AG04450 (cell line): ENCODE measurements at regions of chr5 and their contacts with region 1.

Region 1: GRCh38 chr5:151115274-151115905 is 34.6 kb upstream of the TNIP1 start:
- DNase-seq: no peak
- H3K4me3 ChIP-seq: no peak overlapping the region
- H3K27ac ChIP-seq: no peak overlapping the region
- H3K27me3 ChIP-seq: no peaks in the 10 kb centered on the region
- CTCF ChIP-seq: peak; percentile 100

Region 2: DNA sequence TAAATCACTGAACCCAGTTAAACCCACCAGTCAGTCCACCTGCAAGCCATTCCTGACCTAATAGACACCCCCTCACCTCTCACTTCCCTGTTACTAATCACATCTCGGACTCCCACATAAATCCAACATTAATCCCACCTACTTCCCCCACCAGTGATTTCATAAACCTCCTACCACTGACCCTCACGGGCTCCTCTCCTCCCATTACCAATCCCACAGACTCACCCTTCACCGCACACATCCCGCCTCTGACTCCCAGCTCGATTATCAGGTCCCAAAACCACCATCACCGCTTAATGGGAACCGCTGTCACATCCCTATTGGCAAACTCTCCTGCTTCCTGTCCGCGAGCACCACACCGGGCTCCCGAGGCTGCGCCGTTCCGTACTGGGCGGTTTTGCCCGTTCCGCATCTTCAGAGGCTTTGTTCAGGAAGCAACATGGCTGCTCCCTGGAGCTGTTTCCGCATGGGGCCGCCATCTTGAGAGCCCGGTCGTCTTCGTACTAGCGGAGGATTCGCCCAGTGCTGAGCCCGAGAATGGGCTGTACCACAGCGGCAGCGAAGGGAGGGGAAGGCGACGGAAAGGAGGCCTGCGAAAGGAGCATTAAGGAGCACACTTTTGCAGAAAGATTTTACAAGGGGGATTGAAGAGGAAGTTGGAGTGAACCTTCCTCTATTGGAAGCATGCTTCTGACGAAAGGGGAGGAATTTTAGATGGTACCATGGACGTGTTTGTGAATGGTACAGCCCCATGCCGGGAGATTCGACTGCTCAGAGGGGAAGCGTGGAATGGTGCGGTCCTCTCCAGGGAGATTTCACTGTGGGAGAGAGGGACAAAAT is 210.7 kb before region 1 on chr5 and contains the start of gene ZNF300:
- CTCF ChIA-PET with region 1: no interaction called
- POLR2A ChIA-PET with region 1: no interaction called
- DNase-seq: peak; percentile 88
- H3K4me3 ChIP-seq: peak within 1 kb of the TSS; percentile 90
- H3K27ac ChIP-seq: peak within 1 kb of the TSS; percentile 90
- H3K27me3 ChIP-seq: no peaks in the 10 kb centered on the region
- CTCF ChIP-seq: no peak
- polyA plus RNA-seq, gene ZNF300: 7.3 and 10.1 TPM in 2 replicates

Region 3: DNA sequence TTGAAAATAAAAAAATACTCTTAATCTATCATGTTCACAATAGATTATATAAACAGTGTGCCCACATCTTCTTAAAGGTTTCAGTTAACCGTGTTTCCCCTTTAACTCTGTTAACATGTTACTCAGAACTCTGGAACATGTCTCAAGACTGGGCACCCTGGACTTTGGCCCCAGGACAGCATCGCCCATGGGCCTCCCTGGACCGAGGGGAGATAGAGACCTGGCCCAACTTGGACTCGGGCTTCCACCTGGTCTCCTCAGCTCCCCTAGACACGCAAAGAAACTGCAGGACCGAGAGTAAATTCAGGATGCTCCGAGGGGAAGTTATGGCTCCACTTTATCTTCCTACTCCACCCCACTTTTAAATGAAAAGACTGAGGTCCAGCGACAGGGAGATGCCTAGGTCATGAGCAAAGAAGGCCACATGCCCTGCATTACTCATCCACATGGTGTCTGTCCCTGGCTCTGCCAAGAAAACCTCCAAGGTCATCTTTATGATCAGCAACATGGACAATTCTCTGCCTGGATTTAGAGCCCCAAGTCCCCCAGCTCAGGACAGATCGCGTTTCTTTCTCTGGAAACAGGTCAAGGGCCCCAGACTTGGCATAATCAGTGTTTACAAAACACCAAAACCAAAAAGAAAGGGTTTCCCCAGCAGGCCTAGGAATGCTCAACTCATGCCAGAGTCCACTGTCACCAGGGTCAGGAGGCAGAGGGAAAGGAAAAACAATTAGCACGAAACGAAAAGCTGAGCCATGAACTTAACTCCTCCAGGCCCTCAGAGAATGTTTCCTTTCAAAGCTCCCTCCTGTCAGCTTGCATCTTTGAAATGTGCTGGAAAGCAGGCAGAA is 77.6 kb before region 1 on chr5:
- CTCF ChIA-PET with region 1: interaction called, 52 read pairs
- POLR2A ChIA-PET with region 1: no interaction called
- DNase-seq: peak; percentile 26
- H3K4me3 ChIP-seq: no peak overlapping the region
- H3K27ac ChIP-seq: peak overlapping the region; percentile 67
- H3K27me3 ChIP-seq: no peaks in the 10 kb centered on the region
- CTCF ChIP-seq: no peak

Region 4: GRCh38 chr5:151068433-151069197 is 46.8 kb before region 1 on chr5:
- CTCF ChIA-PET with region 1: interaction called, 16 read pairs
- POLR2A ChIA-PET with region 1: interaction called, 3 read pairs
- DNase-seq: no peak
- H3K4me3 ChIP-seq: no peak overlapping the region
- H3K27ac ChIP-seq: no peak overlapping the region
- H3K27me3 ChIP-seq: no peaks in the 10 kb centered on the region
- CTCF ChIP-seq: no peak

Region 5: DNA sequence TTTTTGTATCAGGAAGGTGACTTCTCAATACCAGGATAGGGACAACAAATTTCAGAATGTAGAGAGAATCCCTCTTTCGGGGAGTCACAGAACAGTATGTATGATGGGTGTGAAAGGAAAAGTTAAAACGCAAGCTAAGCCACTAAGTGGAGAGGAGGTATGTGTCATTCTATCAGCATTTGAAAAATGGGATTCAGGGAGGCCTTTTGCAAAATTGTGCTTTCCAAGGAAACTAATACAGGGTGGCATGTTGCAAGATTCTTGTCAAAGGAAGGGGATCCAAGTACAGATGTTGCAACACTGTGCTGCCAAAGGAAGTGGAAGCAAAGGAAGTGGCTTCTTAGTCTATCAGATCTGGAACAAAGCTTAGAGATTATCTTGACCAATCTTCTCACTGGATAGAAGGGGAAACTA is 21.9 kb before region 1 on chr5:
- CTCF ChIA-PET with region 1: interaction called, 37 read pairs
- POLR2A ChIA-PET with region 1: no interaction called
- DNase-seq: no peak
- H3K4me3 ChIP-seq: no peak overlapping the region
- H3K27ac ChIP-seq: peak overlapping the region; percentile 89
- H3K27me3 ChIP-seq: no peaks in the 10 kb centered on the region
- CTCF ChIP-seq: no peak

Region 6: GRCh38 chr5:151141535-151141934 is 26.1 kb after region 1 on chr5:
- CTCF ChIA-PET with region 1: interaction called, 53 read pairs
- POLR2A ChIA-PET with region 1: no interaction called
- DNase-seq: no peak
- H3K4me3 ChIP-seq: no peak overlapping the region
- H3K27ac ChIP-seq: peak overlapping the region; percentile 39
- H3K27me3 ChIP-seq: no peaks in the 10 kb centered on the region
- CTCF ChIP-seq: no peak

Region 7: GRCh38 chr5:151164686-151165392 is 49.4 kb after region 1 on chr5:
- CTCF ChIA-PET with region 1: interaction called, 84 read pairs
- POLR2A ChIA-PET with region 1: no interaction called
- DNase-seq: peak; percentile 56
- H3K4me3 ChIP-seq: no peak overlapping the region
- H3K27ac ChIP-seq: no peak overlapping the region
- H3K27me3 ChIP-seq: peaks cover 2% of the 10 kb centered on the region
- CTCF ChIP-seq: peak; percentile 93

Region 8: GRCh38 chr5:151338734-151339133 is 223.3 kb after region 1 on chr5:
- CTCF ChIA-PET with region 1: no interaction called
- POLR2A ChIA-PET with region 1: no interaction called
- DNase-seq: no peak
- H3K4me3 ChIP-seq: no peak overlapping the region
- H3K27ac ChIP-seq: no peak overlapping the region
- H3K27me3 ChIP-seq: peaks cover 4% of the 10 kb centered on the region
- CTCF ChIP-seq: no peak